Activated T-helper 2 cell treated with anti-CD3 and anti-CD28 coated beads, Interferon-gamma antibody, Interleukin-2, Interleukin-4, amounts not matched to agents 10 μg/mL and 5 μg/mL and 100 μg/mL, durations not matched to agents 14 hours and 24 hours and 36 hours (primary cell): ENCODE measurements at regions of chr10 and their contacts with region 1.

Region 1: GRCh38 chr10:15370856-15371701 is at the start of gene FAM171A1:
- DNase-seq: peak; percentile 59
- H3K4me3 Mint-ChIP-seq: peak within 1 kb of the TSS; percentile 77
- H3K27ac Mint-ChIP-seq: no peak within 1 kb of the TSS
- H3K4me1 Mint-ChIP-seq: peaks cover 5% of the 10 kb centered on the region
- H3K27me3 Mint-ChIP-seq: peaks cover 64% of the 10 kb centered on the region
- total RNA-seq, gene FAM171A1: 2.9 and 3.6 TPM in 2 replicates

Region 2: DNA sequence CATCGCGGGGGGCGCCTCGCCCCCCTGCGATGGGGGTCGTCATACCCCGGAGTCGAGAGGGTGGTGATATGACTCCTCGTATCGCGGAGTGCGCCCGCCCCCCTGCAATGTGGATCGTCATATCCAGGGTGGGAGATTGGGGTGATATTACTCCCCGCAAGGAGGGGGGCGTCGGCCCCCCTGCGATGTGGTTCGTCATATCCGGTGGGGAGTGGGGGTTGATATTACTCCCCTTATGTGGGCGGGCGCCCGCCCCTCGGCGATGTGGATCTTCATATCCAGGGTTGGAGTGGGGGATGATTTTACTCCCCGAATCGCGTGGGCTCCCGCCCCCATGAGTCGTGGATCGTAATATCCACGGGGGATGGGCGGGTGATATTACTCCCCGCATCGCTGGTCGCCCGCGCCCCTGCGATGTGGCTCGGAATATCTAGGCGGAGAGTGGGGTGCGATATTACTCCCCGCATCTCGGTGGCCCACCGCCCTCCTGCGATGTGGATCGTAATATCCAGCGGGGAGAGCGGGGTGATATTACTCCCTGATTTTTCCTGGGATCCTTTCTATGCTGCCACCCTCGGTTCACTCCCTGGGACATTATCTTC is 375.0 kb before region 1 on chr10:
- intact Hi-C with region 1: loop called (anchors 10 kb)
- DNase-seq: no peak
- H3K4me3 Mint-ChIP-seq: no peak overlapping the region
- H3K27ac Mint-ChIP-seq: no peak overlapping the region
- H3K4me1 Mint-ChIP-seq: peaks cover 7% of the 10 kb centered on the region
- H3K27me3 Mint-ChIP-seq: peaks cover 2% of the 10 kb centered on the region

Region 3: DNA sequence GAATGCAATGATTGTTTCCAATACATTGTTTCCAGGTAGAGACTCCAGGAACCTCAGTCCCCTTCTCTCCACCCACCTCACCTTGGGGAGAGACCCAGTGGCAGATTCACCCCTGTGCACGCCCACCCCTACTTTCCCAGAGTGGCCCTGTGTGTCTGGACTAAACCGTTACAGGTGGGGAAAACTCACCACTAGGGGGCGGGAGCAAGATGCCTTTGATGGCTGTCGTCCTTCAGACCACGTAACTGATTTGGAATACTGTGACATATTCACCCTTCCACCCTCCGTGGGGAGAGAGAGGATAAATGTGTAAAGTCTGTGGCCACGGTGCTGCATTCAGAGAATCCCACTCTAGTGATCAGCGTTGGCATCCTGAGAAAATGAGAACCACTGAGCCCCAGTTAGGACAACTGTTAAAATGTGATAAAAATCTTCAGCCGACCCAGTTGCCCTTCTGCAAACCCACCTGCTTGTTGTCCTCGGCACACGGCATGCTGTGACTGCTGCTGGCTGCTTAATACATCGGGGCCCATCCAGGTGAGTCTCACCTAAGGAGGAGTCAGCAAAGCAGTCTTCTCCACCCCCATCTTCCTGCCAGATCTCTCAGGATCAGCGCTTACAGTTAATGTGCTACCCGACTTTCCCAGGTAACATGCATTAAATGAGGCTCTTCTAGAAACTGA is 161.1 kb before region 1 on chr10:
- intact Hi-C with region 1: loop called (anchors 5 kb)
- DNase-seq: peak; percentile 66
- H3K4me3 Mint-ChIP-seq: no peak overlapping the region
- H3K27ac Mint-ChIP-seq: no peak overlapping the region
- H3K4me1 Mint-ChIP-seq: peaks cover 42% of the 10 kb centered on the region
- H3K27me3 Mint-ChIP-seq: no peaks in the 10 kb centered on the region

Region 4: DNA sequence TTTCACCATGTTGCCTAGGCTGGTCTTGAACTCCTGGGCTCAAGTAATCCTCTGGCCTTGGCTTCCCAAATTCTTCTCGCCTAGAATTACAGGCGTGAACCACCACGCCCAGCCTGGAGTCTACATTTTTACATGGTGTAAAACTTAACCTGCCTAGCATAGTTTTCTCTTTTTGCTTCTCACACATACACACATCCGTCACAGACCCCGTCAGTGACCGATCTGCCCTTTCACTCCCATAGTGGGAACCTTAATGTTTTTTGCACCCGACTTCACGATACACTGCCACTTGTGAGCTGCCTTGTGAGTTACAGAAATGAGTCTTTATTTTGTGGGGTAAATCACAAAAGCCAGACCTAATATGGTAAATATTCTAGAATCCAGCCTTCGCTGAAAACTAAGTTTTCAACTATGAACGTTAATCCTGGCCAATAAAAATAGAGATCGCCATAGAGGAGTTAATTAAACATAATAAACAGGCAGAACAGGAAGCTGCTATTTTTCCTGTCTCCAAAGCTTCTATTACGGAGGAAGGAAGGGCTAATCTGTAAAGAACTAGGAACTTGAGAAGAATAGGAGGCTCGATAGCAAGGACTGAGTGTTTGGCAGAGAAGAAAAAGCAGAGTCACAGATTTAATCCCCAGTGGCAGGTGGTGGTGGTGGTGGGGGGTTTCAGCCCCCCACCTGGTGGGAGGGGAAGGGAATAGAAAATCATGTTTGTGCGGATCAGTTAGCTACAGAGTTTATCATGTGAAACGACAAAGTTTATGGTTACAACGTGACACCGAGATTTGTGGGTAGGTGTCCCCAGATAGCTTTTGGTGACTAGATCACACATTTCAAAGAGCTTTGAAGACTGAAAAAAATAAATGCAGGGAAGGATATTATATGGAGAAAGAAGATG is 14.7 kb after region 1 on chr10:
- intact Hi-C with region 1: no loop called
- DNase-seq: no peak
- H3K4me3 Mint-ChIP-seq: no peak overlapping the region
- H3K27ac Mint-ChIP-seq: no peak overlapping the region
- H3K4me1 Mint-ChIP-seq: no peaks in the 10 kb centered on the region
- H3K27me3 Mint-ChIP-seq: peaks cover 26% of the 10 kb centered on the region

Region 5: GRCh38 chr10:16011548-16011947 is 640.5 kb after region 1 on chr10:
- intact Hi-C with region 1: no loop called
- DNase-seq: no peak
- H3K4me3 Mint-ChIP-seq: no peak overlapping the region
- H3K27ac Mint-ChIP-seq: no peak overlapping the region
- H3K4me1 Mint-ChIP-seq: no peaks in the 10 kb centered on the region
- H3K27me3 Mint-ChIP-seq: no peaks in the 10 kb centered on the region